ENCODE measurements at regions of chr7 and their contacts with region 1.

Region 1: GRCh38 chr7:134935701-134936100 is 50.6 kb upstream of the AGBL3 start:
- DNase-seq: no peak
- ATAC-seq: no peak
- H3K4me3 ChIP-seq: no peak overlapping the region
- H3K4me3 Mint-ChIP-seq: no peak overlapping the region
- H3K27ac ChIP-seq: no peak overlapping the region
- H3K27ac Mint-ChIP-seq: no peak overlapping the region
- H3K4me1 ChIP-seq: peaks cover 3% of the 10 kb centered on the region
- H3K4me1 Mint-ChIP-seq: peaks cover 10% of the 10 kb centered on the region
- H3K27me3 ChIP-seq: no peaks in the 10 kb centered on the region
- H3K27me3 Mint-ChIP-seq: no peaks in the 10 kb centered on the region
- CTCF ChIP-seq: no peak

Region 2: DNA sequence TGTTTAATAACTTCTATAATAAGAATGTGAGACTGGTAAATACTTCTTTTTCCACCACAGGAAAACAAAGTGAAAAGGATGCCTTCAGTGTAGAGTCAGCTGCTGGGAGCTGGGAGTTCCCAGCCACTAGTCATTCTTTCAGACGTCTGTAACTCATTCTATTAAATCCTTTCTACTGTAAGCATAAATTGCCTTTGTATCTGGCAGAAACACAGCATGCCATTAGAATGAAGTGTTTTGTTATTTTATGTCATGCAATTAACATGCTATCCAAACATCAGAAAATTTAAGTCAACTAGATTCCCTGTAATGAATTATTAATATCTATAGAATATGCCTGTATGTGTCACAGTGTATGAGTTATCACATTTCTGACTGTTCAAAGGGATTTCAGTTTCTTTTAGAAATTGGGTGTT is 274.7 kb before region 1 on chr7:
- CTCF ChIA-PET with region 1: no interaction called
- POLR2A ChIA-PET with region 1: no interaction called
- intact Hi-C with region 1: no loop called
- DNase-seq: no peak
- ATAC-seq: no peak
- H3K4me3 ChIP-seq: no peak overlapping the region
- H3K4me3 Mint-ChIP-seq: no peak overlapping the region
- H3K27ac ChIP-seq: no peak overlapping the region
- H3K27ac Mint-ChIP-seq: no peak overlapping the region
- H3K4me1 ChIP-seq: no peaks in the 10 kb centered on the region
- H3K4me1 Mint-ChIP-seq: peaks cover 64% of the 10 kb centered on the region
- H3K27me3 ChIP-seq: no peaks in the 10 kb centered on the region
- H3K27me3 Mint-ChIP-seq: no peaks in the 10 kb centered on the region
- CTCF ChIP-seq: no peak

Region 3: DNA sequence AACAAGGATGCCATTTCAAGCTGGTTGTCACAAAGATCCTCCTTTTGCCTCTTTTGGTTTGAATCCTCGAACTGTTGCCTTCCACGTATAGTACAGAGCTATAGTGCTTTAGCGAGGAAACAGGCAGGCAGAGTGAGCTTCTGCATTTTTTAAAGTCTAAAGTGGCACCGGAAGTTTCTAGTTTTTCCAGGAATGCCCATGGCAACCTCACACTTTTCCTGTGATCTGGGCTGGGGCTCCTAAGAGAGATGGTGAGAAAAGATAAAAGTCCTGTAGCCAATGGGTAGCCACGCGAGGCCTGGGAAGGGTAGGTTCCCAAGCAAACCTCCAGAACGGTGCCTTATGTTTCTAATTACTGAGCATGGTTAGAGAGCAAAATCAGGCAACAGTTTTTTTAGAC is 79.6 kb before region 1 on chr7:
- CTCF ChIA-PET with region 1: no interaction called
- POLR2A ChIA-PET with region 1: no interaction called
- intact Hi-C with region 1: loop called in 1 of 2 experiments (anchors 5 kb)
- DNase-seq: no peak
- ATAC-seq: no peak
- H3K4me3 ChIP-seq: no peak overlapping the region
- H3K4me3 Mint-ChIP-seq: peak overlapping the region; percentile 11
- H3K27ac ChIP-seq: no peak overlapping the region
- H3K27ac Mint-ChIP-seq: peak overlapping the region; percentile 76
- H3K4me1 ChIP-seq: peaks cover 12% of the 10 kb centered on the region
- H3K4me1 Mint-ChIP-seq: peaks cover 30% of the 10 kb centered on the region
- H3K27me3 ChIP-seq: no peaks in the 10 kb centered on the region
- H3K27me3 Mint-ChIP-seq: no peaks in the 10 kb centered on the region
- CTCF ChIP-seq: no peak

Region 4: DNA sequence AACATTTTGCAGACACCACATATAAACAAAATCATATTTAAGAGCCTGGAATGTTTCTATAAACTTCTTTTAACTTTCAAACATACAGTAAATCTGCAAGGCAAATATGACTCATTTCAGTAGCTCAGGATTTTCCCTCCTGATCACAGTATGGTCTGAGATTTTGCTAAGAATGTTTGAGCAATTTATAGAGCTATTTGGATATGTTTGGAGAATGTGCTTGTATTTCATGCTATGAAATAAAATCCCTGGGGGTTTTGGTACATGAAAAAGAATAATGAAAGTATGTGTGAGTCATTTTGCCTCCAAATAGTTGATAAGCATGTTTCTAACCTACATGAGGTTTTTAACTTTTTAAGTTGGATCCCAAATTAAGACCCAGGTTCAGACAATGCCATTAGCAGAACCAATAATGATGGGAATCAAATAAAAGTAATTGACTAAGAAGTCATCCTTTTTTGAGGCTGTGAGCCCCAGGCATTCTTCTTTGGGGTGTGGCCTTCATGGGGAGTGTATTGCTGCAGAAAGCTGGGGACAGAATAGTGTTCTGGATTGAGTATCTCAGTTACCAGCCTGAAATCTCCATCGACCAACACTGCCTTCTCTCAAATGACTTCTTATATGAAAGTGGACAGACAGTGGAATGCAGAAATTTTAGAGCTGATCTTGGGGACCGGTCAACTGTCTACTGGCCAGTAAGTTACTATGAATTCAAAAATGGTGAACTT is 15.5 kb before region 1 on chr7:
- CTCF ChIA-PET with region 1: no interaction called
- POLR2A ChIA-PET with region 1: no interaction called
- intact Hi-C with region 1: no loop called
- DNase-seq: no peak
- ATAC-seq: no peak
- H3K4me3 ChIP-seq: no peak overlapping the region
- H3K4me3 Mint-ChIP-seq: no peak overlapping the region
- H3K27ac ChIP-seq: no peak overlapping the region
- H3K27ac Mint-ChIP-seq: no peak overlapping the region
- H3K4me1 ChIP-seq: no peaks in the 10 kb centered on the region
- H3K4me1 Mint-ChIP-seq: no peaks in the 10 kb centered on the region
- H3K27me3 ChIP-seq: no peaks in the 10 kb centered on the region
- H3K27me3 Mint-ChIP-seq: no peaks in the 10 kb centered on the region
- CTCF ChIP-seq: no peak

Measured in CD4-positive, alpha-beta T cell (primary cell).